ENCODE measurements at regions of chr1 and their contacts with region 1.

Region 1: DNA sequence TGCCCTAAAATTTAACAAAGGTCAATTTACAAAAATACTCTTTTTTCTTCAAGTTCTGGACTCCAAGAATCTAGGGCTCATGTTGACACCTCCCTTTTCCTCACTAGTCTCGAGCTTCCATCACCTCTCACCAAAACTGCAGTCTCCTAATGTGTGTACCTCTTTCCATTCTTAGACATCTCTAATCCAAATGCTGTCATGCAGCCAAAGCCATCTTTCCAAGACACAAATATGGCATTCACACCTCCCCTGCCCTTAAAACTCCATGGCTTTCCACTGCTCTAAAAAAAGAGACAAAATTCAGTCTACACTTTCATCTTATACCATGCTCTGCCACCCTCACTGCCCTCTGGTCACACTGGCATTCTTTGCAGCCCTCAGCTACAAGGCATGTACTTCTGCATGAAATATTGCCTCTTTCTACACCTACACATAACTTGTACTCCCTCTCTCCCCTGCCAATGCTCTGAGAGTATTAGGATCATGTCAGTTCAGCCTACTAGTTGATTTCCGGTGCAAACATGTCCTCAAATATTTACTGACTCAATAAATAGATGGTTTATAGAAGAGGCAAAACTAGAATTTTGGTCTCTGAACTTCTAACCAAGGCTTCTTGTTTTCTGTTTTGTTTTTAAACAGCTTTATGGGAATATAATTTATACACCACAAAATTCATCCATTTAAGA is 26.9 kb downstream of the ADSS2 start:
- DNase-seq: no peak
- H3K4me3 ChIP-seq: no peak overlapping the region
- H3K27ac ChIP-seq: no peak overlapping the region
- H3K27me3 ChIP-seq: no peaks in the 10 kb centered on the region
- CTCF ChIP-seq: no peak

Region 2: GRCh38 chr1:244414543-244414942 is 10.2 kb before region 1 on chr1:
- CTCF ChIA-PET with region 1: interaction called, 12 read pairs
- POLR2A ChIA-PET with region 1: no interaction called
- DNase-seq: peak; percentile 8
- H3K4me3 ChIP-seq: no peak overlapping the region
- H3K27ac ChIP-seq: no peak overlapping the region
- H3K27me3 ChIP-seq: no peaks in the 10 kb centered on the region
- CTCF ChIP-seq: peak; percentile 43

Region 3: GRCh38 chr1:244450597-244451538 is 26.1 kb after region 1 on chr1:
- CTCF ChIA-PET with region 1: no interaction called
- POLR2A ChIA-PET with region 1: no interaction called
- DNase-seq: peak; percentile 47
- H3K4me3 ChIP-seq: peak overlapping the region; percentile 92
- H3K27ac ChIP-seq: peak overlapping the region; percentile 83
- H3K27me3 ChIP-seq: no peaks in the 10 kb centered on the region
- CTCF ChIP-seq: no peak